HEK293 (cell line): ENCODE measurements at regions of chr4 and their contacts with region 1.

Region 1: DNA sequence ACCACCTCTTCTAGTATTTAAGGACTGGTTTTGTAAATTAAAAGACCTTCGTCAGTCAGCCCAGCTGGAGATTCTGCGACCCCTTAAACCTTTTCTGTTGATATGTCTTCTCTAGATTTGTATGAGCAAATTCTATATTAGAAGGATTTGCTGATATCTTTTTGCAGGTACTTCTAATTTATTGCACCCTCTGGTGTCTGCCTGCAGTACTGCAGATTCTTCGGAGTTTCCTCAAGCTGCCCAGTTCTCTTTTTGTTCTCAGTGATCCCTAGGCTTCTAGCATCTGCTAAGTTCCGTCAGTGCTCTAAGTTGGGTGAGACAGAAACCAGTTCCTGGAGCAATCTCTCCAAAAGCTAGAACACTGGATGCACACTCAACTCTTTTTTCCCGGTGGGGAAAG is 545.2 kb downstream of the C4orf33 start:
- H3K4me3 ChIP-seq: no peak overlapping the region
- H3K27ac ChIP-seq: no peak overlapping the region
- H3K4me1 ChIP-seq: no peaks in the 10 kb centered on the region
- CTCF ChIP-seq: no peak

Region 2: GRCh38 chr4:129344058-129344457 is 297.1 kb before region 1 on chr4:
- CTCF ChIA-PET with region 1: interaction called, 19 read pairs
- POLR2A ChIA-PET with region 1: no interaction called
- H3K4me3 ChIP-seq: no peak overlapping the region
- H3K27ac ChIP-seq: no peak overlapping the region
- H3K4me1 ChIP-seq: no peaks in the 10 kb centered on the region
- CTCF ChIP-seq: no peak

Region 3: DNA sequence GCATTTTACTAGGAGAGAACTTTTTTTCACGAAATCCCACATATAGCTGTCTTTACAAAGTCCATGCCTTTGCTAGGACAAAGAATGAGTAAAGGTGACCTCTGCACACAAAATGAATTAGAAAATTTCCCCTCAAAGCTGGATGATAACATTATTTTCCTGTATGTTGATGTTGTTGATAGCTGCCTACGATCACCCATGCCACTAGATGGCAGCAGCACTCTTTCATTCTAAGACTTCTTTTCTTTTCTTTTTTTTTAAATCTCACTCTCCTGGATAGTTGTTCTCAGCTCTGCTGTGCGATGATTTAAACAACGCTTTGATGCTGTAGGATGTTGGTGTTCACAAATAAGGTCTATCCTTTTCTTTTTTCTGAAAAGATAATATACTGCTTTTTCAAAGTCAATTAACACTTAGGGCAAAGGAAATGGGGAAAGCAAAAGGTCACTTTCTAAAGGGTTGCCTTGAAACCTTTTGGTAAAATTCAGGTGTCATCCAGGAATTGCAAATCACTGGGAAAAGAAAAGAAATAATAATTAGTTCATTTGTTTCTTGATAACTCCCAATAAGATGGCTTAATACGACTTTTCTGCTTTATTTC is 278.4 kb before region 1 on chr4:
- CTCF ChIA-PET with region 1: interaction called, 17 read pairs
- POLR2A ChIA-PET with region 1: no interaction called
- H3K4me3 ChIP-seq: no peak overlapping the region
- H3K27ac ChIP-seq: no peak overlapping the region
- H3K4me1 ChIP-seq: no peaks in the 10 kb centered on the region
- CTCF ChIP-seq: peak; percentile 34; the same call in 1 of the 2 replicates